H1 (cell line): ENCODE measurements at regions of chr5 and their contacts with region 1.

Region 1: DNA sequence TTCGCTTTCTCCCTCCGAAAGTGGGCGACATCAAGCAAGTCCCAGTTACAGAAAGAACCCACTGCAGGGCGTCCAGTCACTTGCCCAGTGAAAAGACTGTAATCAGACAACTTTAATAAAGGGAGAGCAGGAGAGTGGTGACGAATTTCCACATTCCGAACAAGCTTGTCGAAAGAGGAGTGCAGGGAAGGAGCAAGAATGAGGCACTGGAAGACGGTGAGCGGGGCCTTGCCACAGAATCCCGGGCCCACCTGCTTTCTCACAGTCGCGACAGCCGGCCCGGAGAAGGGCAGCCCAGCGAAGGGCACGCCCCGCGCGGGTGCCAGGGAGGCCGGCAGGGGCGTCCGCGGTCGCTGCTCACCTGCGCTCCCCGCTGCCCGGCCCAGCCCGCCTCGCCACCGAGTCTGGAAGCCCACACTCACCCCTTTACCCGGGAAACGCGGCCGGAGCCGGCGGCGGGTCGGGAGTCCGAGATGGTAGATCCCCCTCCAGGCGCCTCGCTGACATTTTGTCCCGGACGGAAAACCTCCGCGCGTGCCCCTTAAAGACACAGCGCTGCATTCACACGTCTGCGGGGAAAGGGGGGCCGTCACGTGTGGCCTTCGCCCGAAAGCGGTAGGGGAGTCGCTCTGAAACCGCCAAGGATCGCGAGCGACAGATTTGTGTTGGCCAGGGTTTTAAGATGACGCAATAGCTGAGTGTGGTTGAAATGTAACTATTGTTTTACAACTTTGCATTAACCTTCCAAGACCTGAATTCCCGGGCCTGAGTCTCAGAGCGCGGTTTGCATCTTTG is at the start of gene ZBED3:
- DNase-seq: peak in 1 of 2 experiments; percentile 77
- H3K4me3 ChIP-seq: peak within 1 kb of the TSS; percentile 58 to 87 (median 74)
- H3K27ac ChIP-seq: peak within 1 kb of the TSS; percentile 94
- H3K4me1 ChIP-seq: peaks cover 6 to 10% (median 8%) of the 10 kb centered on the region in 4 experiments; a peak in 6 of 7 replicates
- H3K27me3 ChIP-seq: no peaks in the 10 kb centered on the region
- CTCF ChIP-seq: peak in 2 of 3 experiments; percentile 8 to 36; a peak in 2 of 4 replicates
- EP300 ChIP-seq: no peak; a peak in 1 of 3 replicates
- POLR2A ChIP-seq: peak; percentile 83
- RAD21 ChIP-seq: 0 out of 4 replicates have a peak, but pooled peaks of 1 of the 2 experiments have one; percentile 12
- total RNA-seq, gene ZBED3: 6.6 and 7.9 TPM in 2 replicates

Region 2: GRCh38 chr5:76818844-76819831 is 267.7 kb before region 1 on chr5 and contains the start of gene F2RL1:
- CTCF ChIA-PET with region 1: no interaction called
- POLR2A ChIA-PET with region 1: interaction called, 13 read pairs
- DNase-seq: peak; percentile 88 to 92
- H3K4me3 ChIP-seq: peak within 1 kb of the TSS; percentile 73 to 99 (median 86)
- H3K27ac ChIP-seq: peak within 1 kb of the TSS; percentile 39; the same call in 1 of the 2 replicates
- H3K4me1 ChIP-seq: peaks cover 0 to 16% (median 8%) of the 10 kb centered on the region in 4 experiments; a peak in 5 of 7 replicates
- H3K27me3 ChIP-seq: peaks cover 0 to 5% (median 4%) of the 10 kb centered on the region in 4 experiments; a peak in 2 of 7 replicates
- CTCF ChIP-seq: 0 out of 4 replicates have a peak, but pooled peaks of 1 of the 3 experiments have one; percentile 6
- EP300 ChIP-seq: peak in 1 of 2 experiments; percentile 88; a peak in 1 of 3 replicates
- POLR2A ChIP-seq: peak; percentile 79 to 81
- RAD21 ChIP-seq: peak in 1 of 2 experiments; percentile 32; a peak in 1 of 4 replicates
- total RNA-seq, gene F2RL1: 23.2 and 23.5 TPM in 2 replicates

Region 3: GRCh38 chr5:76874088-76874581 is 212.8 kb before region 1 on chr5:
- CTCF ChIA-PET with region 1: no interaction called
- POLR2A ChIA-PET with region 1: interaction called, 12 read pairs
- DNase-seq: no peak
- H3K4me3 ChIP-seq: no peak overlapping the region
- H3K27ac ChIP-seq: no peak overlapping the region
- H3K4me1 ChIP-seq: peaks cover 1 to 9% (median 6%) of the 10 kb centered on the region in 4 experiments; a peak in 5 of 7 replicates
- H3K27me3 ChIP-seq: no peaks in the 10 kb centered on the region
- CTCF ChIP-seq: no peak
- EP300 ChIP-seq: no peak
- POLR2A ChIP-seq: no peak
- RAD21 ChIP-seq: no peak

Region 4: DNA sequence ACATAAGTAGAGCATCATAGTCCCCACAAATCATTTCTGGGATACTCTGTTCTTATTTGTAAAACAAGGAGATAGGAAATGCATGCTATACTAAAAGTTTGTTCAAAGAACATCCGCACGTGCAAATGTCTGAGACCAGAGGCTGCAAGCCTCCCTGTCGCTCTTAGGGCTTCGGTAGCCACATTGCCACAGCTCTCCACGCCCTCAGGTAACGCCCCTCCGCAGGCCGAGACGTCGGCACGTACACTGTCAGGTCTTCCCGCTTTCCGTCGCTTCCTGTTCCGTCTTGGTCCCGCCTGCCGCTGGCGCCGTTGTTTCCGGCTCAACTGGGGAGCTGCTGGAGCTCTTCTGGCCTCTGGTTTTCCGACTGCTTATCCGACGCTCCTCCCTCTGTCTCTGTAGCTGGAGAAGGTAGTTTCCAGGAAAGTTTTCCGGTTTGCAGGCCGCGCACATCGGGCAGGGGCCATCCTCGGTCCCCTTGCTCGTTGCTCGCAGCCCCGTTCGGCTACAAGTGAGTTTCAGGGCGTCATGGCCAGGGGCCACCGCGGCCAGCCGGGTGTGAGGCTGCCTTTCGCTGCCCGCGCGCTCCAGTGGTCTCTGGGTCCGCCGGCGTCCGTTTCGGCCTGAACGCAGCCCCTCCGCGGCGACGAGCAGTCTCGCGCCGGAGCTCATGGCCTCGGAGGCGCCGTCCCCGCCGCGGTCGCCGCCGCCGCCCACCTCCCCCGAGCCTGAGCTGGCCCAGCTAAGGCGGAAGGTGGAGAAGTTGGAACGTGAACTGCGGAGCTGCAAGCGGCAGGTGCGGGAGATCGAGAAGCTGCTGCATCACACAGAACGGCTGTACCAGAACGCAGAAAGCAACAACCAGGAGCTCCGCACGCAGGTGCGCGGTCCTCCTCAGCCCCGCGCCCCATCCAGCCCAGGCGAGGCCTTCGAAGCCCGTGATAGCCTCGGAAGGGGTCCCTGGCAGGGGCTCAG is 56.5 kb before region 1 on chr5 and contains the start of gene AGGF1:
- CTCF ChIA-PET with region 1: interaction called, 3 read pairs
- POLR2A ChIA-PET with region 1: interaction called, 17 read pairs
- DNase-seq: peak; percentile 79 to 85
- H3K4me3 ChIP-seq: peak within 1 kb of the TSS; percentile 63 to 82 (median 70)
- H3K27ac ChIP-seq: peak within 1 kb of the TSS; percentile 48; the same call in 1 of the 2 replicates
- H3K4me1 ChIP-seq: peaks cover 0 to 7% (median 0%) of the 10 kb centered on the region in 4 experiments; a peak in 1 of 7 replicates
- H3K27me3 ChIP-seq: peaks cover 0 to 7% (median 3%) of the 10 kb centered on the region in 4 experiments; a peak in 4 of 7 replicates
- CTCF ChIP-seq: no peak
- EP300 ChIP-seq: no peak
- POLR2A ChIP-seq: peak in 1 of 2 experiments; percentile 73; a peak in 2 of 3 replicates
- RAD21 ChIP-seq: no peak
- total RNA-seq, gene AGGF1: 18.7 and 19.0 TPM in 2 replicates

Region 5: DNA sequence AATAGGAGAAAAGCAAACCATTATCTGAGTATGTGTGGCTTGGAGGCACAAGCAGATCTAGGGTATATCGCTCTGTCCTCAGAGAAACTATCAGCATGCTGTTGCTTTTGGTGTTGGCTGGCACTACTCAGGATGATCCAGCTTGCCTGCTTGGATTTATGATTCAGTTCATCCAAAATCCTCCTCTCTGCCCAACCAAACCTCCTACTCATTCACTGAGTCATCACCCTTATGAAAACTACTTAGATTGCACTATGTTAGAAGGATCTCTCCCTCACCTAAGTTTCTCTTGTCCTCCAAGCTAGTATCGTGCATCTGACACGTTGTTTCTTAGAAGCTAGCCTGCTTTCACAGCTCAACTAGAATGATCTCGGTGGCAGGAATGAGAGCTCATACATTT is 14.4 kb after region 1 on chr5:
- CTCF ChIA-PET with region 1: interaction called, 3 read pairs
- POLR2A ChIA-PET with region 1: interaction called, 73 read pairs
- DNase-seq: no peak
- H3K4me3 ChIP-seq: no peak overlapping the region
- H3K27ac ChIP-seq: no peak overlapping the region
- H3K4me1 ChIP-seq: no peaks in the 10 kb centered on the region
- H3K27me3 ChIP-seq: no peaks in the 10 kb centered on the region
- CTCF ChIP-seq: no peak
- EP300 ChIP-seq: no peak
- POLR2A ChIP-seq: no peak
- RAD21 ChIP-seq: no peak

Region 6: DNA sequence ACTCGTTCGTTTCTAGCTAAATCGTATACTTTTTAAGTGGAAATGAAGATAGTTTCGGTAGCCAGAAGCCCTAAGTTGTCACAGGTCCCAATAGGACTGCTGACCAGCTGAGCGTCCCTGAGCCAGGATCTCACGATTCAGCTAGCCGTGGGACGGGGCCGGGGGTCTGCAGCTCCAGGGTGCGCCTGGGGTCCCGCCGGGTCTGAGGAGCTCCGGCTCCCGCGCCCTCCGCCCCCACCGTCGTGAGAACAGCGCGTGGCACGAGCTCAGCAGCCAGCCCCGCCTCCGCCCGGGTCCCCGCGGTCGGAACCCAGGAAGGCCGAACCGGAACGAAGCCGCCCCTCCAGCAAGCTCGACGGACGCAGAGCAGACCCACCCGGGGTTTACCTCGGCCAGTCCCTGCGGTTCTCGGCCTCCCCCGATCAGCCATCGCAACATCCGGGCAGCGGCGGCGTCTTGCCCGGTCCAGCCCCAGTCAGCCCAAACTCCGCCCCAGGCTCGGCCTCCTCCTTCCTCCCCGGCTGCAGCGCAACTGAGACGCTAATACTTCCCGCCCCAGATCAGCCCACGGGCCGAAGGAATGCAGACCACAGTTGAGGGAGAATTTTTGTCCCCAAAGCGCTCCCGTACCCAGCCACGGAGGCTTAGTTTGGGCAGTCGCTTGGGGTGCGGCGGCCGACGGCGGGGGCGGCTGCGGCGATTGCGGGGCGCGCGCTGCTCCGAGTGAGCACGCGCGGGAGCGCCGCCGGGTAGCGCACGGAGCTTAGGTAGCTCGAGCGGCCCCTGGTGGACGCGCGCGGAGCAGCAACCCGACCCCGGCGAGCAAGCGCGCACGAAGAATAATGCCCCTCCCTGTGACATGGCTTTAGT is 405.1 kb after region 1 on chr5 and contains the start of gene WDR41:
- CTCF ChIA-PET with region 1: no interaction called
- POLR2A ChIA-PET with region 1: interaction called, 17 read pairs
- DNase-seq: peak; percentile 61 to 96
- H3K4me3 ChIP-seq: peak within 1 kb of the TSS; percentile 63 to 86 (median 80)
- H3K27ac ChIP-seq: peak within 1 kb of the TSS; percentile 79; the same call in 1 of the 2 replicates
- H3K4me1 ChIP-seq: peaks cover 0 to 2% (median 0%) of the 10 kb centered on the region in 4 experiments; a peak in 3 of 7 replicates
- H3K27me3 ChIP-seq: no peaks in the 10 kb centered on the region
- CTCF ChIP-seq: peak; percentile 78 to 87 (median 85)
- EP300 ChIP-seq: peak in 1 of 2 experiments; percentile 34; a peak in 1 of 3 replicates
- POLR2A ChIP-seq: peak in 1 of 2 experiments; percentile 77; a peak in 2 of 3 replicates
- RAD21 ChIP-seq: peak; percentile 57 to 73
- total RNA-seq, gene WDR41: 43.0 and 44.9 TPM in 2 replicates